Pancreas (tissue), 10 donors: ENCODE measurements at regions of chr17 and their contacts with region 1.

Region 1: GRCh38 chr17:47840740-47841603 is at the start of gene SCRN2:
- DNase-seq: peak; percentile 84 to 98 (median 94)
- ATAC-seq: peak; percentile 89 to 95 (median 94)
- H3K4me3 ChIP-seq: peak within 1 kb of the TSS; percentile 85 to 95 (median 94)
- H3K27ac ChIP-seq: peak within 1 kb of the TSS; percentile 5 to 64 (median 58)
- H3K4me1 ChIP-seq: peaks cover 8 to 26% (median 16%) of the 10 kb centered on the region in 3 donors
- H3K27me3 ChIP-seq: no peaks in the 10 kb centered on the region
- CTCF ChIP-seq: peak; percentile 83 to 98 (median 94)
- total RNA-seq, gene SCRN2: 12.6 to 24.3 (median 19.0) TPM

Region 2: DNA sequence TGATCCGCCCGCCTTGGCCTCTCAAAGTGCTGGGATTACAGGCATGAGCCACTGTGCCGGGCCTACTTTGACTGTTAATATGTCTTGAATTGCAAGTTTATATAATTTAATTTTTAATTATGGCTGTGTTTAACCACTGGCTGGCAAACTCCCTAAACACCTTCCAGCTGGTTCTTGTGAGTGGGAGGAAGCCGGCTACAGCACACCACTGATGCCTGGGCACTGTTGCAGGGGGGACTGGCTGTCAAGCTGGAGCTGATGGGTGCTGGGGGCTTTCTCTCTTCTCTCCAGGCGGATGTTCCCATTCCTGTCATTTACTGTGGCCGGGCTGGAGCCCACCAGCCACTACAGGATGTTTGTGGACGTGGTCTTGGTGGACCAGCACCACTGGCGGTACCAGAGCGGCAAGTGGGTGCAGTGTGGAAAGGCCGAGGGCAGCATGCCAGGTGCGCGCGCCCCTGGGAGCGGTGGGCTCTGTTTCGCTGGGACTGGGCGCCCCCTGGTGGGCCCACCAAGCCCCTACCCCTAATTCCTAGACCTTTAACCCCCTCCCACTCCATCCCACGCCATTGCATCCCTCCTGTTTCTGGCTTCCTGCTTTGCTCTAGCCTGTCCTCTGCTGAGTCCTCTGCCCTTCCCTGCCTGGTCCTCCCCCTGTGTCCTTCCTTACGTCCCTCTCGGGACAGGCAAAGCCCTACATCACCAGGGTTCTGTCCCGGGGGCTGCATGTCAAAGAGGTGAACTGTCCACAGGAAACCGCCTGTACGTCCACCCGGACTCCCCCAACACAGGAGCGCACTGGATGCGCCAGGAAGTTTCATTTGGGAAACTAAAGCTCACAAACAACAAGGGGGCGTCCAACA is 98.4 kb before region 1 on chr17:
- intact Hi-C with region 1: no loop called
- DNase-seq: no peak
- ATAC-seq: peak in 1 of 4 donors; percentile 38
- H3K4me3 ChIP-seq: no peak overlapping the region
- H3K27ac ChIP-seq: no peak overlapping the region
- H3K4me1 ChIP-seq: no peaks in the 10 kb centered on the region
- H3K27me3 ChIP-seq: peaks cover 0 to 5% (median 0%) of the 10 kb centered on the region in 4 donors
- CTCF ChIP-seq: no peak

Region 3: DNA sequence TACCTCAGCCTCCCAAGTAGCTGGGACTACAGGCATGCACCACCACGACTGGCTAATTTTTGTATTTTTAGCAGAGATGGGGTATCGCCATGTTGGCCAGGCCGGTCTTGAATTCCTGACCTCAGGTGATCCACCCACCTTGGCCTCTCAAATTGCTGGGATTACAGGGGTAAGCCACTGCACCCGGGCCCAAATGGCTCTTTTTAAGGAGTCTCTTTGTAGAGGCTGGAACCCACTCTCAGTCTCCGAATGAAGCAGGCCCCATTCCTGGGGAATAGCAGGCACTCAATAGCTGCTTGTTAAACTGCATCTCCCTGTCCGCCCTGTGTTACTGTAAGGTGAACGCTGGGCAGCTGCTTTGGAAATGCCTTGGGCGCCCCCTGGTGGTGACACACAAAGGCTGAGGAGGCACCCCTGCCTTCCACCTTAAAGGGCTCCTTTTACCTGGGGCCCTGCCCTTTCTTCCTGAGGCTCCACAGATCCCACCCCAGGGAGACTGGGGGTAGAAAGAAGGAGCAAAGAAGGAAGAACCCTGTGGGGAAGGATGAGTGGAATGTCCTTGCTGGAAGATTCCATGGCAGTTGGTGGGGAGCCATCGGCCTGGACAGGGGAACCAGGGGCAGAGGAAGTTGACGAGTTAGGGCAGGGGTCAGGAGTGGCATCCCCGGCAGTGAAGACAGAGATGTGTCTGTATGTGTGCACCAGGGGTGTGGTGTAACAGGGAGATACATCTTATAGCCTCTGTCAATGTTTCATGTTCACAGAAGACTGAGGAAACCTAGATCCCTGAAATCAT is 49.0 kb after region 1 on chr17:
- intact Hi-C with region 1: loop called in 2 of 3 experiments (anchors 2 to 5 kb)
- DNase-seq: peak; percentile 75 to 98 (median 90)
- ATAC-seq: peak; percentile 95 to 98 (median 96)
- H3K4me3 ChIP-seq: no peak overlapping the region
- H3K27ac ChIP-seq: no peak overlapping the region
- H3K4me1 ChIP-seq: peaks cover 0 to 7% (median 0%) of the 10 kb centered on the region in 3 donors
- H3K27me3 ChIP-seq: no peaks in the 10 kb centered on the region
- CTCF ChIP-seq: peak; percentile 94 to 97 (median 96)

Region 4: DNA sequence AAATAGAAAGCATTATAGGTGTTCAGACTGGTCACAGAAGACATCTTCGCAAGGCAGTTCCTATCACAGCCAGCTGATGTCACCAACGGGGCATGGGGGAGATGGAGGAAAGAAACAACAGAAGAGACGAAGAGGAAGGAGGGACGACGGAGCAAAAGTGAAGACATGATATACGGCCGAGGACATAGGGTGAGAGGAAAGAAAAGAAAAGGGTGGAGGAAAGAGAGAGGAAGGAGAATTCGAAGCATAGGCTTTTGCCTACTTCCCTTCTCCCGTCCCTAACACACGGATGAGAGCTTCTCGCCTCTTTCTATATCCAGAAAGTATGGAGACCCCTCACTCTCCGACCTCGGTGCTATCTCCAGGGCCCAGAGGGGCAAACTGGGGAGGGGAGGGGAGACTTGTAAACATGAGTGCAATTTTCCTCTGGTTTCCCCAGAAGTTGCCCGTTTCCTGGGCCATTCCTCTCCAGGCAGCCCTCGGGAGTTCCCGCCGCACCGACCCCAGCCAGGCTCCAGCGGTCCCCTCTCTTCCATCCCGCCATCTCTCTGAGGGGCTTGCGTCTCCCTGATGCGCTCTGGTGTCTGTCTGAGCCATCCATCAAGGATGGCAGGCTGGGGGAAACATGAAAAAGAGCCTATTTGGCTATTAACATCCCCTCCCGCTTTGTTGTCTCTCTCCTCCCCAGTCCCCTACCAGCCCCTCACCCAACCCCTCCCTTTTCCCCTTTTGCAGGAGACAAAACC is 170.6 kb after region 1 on chr17:
- intact Hi-C with region 1: loop called in 1 of 3 experiments (anchors 10 kb)
- DNase-seq: no peak
- ATAC-seq: peak in 3 of 4 donors; percentile 65 to 73 (median 70)
- H3K4me3 ChIP-seq: peak overlapping the region in 1 of 4 donors; percentile 38
- H3K27ac ChIP-seq: no peak overlapping the region
- H3K4me1 ChIP-seq: peaks cover 0 to 5% (median 0%) of the 10 kb centered on the region in 3 donors
- H3K27me3 ChIP-seq: no peaks in the 10 kb centered on the region
- CTCF ChIP-seq: no peak

Region 5: GRCh38 chr17:48024937-48025906 is 184.2 kb after region 1 on chr17:
- intact Hi-C with region 1: loop called in 1 of 3 experiments (anchors 5 kb)
- DNase-seq: peak; percentile 94 to 99 (median 99)
- ATAC-seq: peak; percentile 81 to 91 (median 86)
- H3K4me3 ChIP-seq: peak overlapping the region in 3 of 4 donors; percentile 9 to 53 (median 37)
- H3K27ac ChIP-seq: peak overlapping the region; percentile 6 to 71 (median 42)
- H3K4me1 ChIP-seq: peaks cover 24 to 30% (median 28%) of the 10 kb centered on the region in 3 donors
- H3K27me3 ChIP-seq: no peaks in the 10 kb centered on the region
- CTCF ChIP-seq: peak; percentile 60 to 75 (median 68)